ENCODE measurements at regions of chr1 and their contacts with region 1.

Region 1: DNA sequence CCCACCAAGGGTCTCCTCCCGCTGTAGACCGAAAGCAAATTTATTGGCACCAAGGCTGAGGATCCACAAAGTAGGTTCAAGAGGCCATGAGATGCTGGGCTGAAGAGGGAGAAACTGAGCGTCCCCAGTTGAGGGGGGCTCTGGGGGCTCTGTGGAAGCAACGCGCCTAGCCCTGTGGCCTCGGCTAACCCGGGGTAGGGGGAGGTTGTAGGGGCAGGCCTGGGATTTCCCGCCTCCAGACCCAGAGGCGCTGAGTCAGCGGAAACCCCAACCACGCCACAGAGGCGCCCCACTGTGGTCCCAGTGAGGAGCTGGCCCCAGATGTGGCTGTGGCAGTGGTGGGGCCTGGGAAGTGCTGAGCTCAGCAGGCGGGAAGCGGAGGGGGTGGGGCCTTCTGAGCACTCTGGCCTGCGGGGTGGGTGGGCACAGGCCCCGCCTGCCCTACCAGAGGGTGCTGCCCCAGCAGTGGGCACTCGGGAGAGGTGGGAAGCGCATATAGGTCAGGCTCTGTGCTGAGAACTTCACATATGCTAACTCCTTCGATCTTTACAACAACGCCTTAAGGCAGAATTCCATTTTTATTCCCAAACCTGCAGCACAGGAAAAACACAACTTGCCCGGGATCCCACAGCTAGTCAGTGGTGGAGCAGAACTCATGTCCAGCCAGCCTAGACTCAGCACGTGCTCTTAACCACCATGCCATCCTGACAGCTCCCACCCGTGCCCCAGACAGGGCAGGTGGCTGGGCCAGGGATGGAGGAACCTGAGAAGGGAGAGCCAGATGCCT is 1.5 kb upstream of the COL16A1 start:
- DNase-seq: peak; percentile 66
- H3K4me3 Mint-ChIP-seq: no peak overlapping the region
- H3K27ac Mint-ChIP-seq: peak overlapping the region; percentile 55
- H3K4me1 Mint-ChIP-seq: peaks cover 75% of the 10 kb centered on the region
- H3K27me3 Mint-ChIP-seq: no peaks in the 10 kb centered on the region
- CTCF ChIP-seq: peak; percentile 25

Region 2: GRCh38 chr1:31663622-31664452 is 41.4 kb before region 1 on chr1:
- CTCF ChIA-PET with region 1: interaction called, 8 read pairs
- POLR2A ChIA-PET with region 1: interaction called, 46 read pairs
- intact Hi-C with region 1: loop called (anchors 1 kb)
- DNase-seq: peak; percentile 67
- H3K4me3 Mint-ChIP-seq: no peak overlapping the region
- H3K27ac Mint-ChIP-seq: no peak overlapping the region
- H3K4me1 Mint-ChIP-seq: peaks cover 24% of the 10 kb centered on the region
- H3K27me3 Mint-ChIP-seq: no peaks in the 10 kb centered on the region
- CTCF ChIP-seq: peak; percentile 95

Region 3: DNA sequence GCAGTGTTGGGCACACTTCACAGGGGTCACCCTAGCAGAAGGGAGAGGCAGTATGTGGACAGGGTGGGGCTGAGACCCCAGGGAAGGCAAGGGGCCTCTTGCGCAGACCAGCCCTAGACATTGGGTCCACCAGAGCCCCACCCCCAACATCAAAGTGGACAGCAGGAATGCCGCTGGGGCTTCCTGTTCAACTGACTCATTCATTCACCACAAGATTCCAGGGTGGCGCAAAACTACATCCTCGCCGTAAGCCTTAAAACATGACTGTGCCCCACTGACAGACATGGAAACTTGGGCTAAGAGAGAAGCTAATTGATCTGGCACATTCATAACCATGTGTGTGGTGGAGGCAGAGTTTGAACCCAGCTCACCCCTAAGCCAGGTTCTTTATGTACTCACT is 15.5 kb before region 1 on chr1:
- CTCF ChIA-PET with region 1: interaction called, 3 read pairs
- POLR2A ChIA-PET with region 1: interaction called, 15 read pairs
- intact Hi-C with region 1: no loop called
- DNase-seq: peak; percentile 95
- H3K4me3 Mint-ChIP-seq: no peak overlapping the region
- H3K27ac Mint-ChIP-seq: peak overlapping the region; percentile 39
- H3K4me1 Mint-ChIP-seq: peaks cover 18% of the 10 kb centered on the region
- H3K27me3 Mint-ChIP-seq: no peaks in the 10 kb centered on the region
- CTCF ChIP-seq: no peak

Region 4: GRCh38 chr1:31745096-31745945 is 40.0 kb after region 1 on chr1:
- CTCF ChIA-PET with region 1: interaction called, 11 read pairs
- POLR2A ChIA-PET with region 1: interaction called, 4 read pairs
- intact Hi-C with region 1: no loop called
- DNase-seq: peak; percentile 66
- H3K4me3 Mint-ChIP-seq: no peak overlapping the region
- H3K27ac Mint-ChIP-seq: no peak overlapping the region
- H3K4me1 Mint-ChIP-seq: peaks cover 9% of the 10 kb centered on the region
- H3K27me3 Mint-ChIP-seq: no peaks in the 10 kb centered on the region
- CTCF ChIP-seq: peak; percentile 89